Left ventricle myocardium inferior (tissue), 1 donor: ENCODE measurements at regions of chr19 and their contacts with region 1.

Region 1: GRCh38 chr19:5987077-5987818 is 9.3 kb upstream of the RANBP3 start:
- DNase-seq: peak; percentile 58
- H3K4me3 ChIP-seq: peak overlapping the region; percentile 56
- H3K27ac ChIP-seq: no peak overlapping the region
- H3K4me1 ChIP-seq: peaks cover 11% of the 10 kb centered on the region
- H3K27me3 ChIP-seq: no peaks in the 10 kb centered on the region
- CTCF ChIP-seq: peak; percentile 98

Region 2: DNA sequence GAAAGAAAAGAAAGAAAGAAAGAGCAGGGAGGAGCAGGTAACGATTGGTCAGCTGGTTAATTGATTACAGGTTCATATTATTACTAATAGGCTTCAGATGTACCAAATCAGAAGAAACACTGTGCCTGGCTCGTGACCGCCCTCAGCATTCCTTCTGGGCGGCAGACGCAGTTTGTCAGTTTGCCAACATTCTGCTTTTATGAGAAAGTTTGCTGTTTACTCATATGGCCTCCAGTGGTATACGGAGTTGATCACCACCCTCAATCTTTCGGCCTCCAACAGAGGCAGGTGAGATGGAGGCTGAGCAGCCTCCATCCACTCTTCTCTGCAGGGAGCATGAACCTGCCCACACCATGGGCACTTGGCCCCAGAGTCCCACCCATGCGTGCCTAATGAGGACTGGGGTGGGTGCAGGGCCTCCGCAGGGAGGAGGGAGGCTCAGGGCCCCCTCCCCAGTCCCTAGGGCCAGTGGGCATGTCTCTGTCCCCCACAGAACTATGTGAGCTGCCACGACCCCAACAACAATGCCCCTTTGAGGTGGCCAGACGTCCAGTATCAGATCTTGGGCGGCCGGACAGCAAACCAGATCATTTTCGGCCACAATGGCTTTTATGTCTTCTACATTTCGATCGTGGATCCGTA is 211.5 kb before region 1 on chr19:
- intact Hi-C with region 1: no loop called
- DNase-seq: no peak
- H3K4me3 ChIP-seq: no peak overlapping the region
- H3K27ac ChIP-seq: no peak overlapping the region
- H3K4me1 ChIP-seq: no peaks in the 10 kb centered on the region
- H3K27me3 ChIP-seq: peaks cover 12% of the 10 kb centered on the region
- CTCF ChIP-seq: no peak

Region 3: GRCh38 chr19:5827891-5828660 is 159.2 kb before region 1 on chr19:
- intact Hi-C with region 1: no loop called
- DNase-seq: peak; percentile 79
- H3K4me3 ChIP-seq: peak overlapping the region; percentile 61
- H3K27ac ChIP-seq: peak overlapping the region; percentile 79
- H3K4me1 ChIP-seq: peaks cover 27% of the 10 kb centered on the region
- H3K27me3 ChIP-seq: peaks cover 55% of the 10 kb centered on the region
- CTCF ChIP-seq: no peak

Region 4: DNA sequence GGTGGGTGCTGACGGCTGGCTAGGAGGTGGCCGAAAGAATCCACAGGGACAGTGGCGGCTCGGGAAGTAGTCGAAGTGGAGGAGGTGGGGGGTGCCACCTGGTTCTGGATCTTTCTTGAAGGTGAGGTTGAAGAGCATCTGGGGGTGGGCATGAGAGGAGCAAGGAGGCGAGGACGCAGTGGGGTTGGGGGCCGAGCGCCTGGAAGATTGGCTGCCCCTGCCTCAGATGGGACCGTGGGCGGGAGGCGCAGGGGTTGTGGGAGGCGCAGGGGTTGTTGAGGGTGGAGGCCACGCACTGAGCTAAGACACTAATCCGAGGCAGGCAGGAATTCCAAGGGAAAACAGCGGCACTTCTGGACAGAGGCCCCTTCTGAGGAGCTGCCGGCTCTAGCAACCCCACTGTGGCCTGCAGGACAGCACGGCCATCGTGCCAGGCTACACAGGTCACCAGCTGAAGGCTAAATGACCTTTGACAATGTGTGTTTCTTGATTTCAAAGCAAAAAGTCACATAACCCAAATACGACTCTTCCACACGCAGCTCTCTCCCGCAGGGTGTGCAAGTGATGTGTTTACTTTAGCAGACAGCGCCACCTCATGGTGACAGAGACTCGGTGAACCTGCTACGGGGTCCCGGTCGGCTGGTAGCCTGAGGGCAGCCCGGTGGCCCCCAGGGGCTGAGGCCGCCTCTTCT is 34.8 kb after region 1 on chr19:
- intact Hi-C with region 1: loop called (anchors 5 kb)
- DNase-seq: peak; percentile 70
- H3K4me3 ChIP-seq: no peak overlapping the region
- H3K27ac ChIP-seq: no peak overlapping the region
- H3K4me1 ChIP-seq: peaks cover 16% of the 10 kb centered on the region
- H3K27me3 ChIP-seq: no peaks in the 10 kb centered on the region
- CTCF ChIP-seq: peak; percentile 89

Region 5: GRCh38 chr19:6076675-6077463 is 89.6 kb after region 1 on chr19:
- intact Hi-C with region 1: no loop called
- DNase-seq: no peak
- H3K4me3 ChIP-seq: no peak overlapping the region
- H3K27ac ChIP-seq: no peak overlapping the region
- H3K4me1 ChIP-seq: peaks cover 10% of the 10 kb centered on the region
- H3K27me3 ChIP-seq: no peaks in the 10 kb centered on the region
- CTCF ChIP-seq: no peak